H1 (cell line): ENCODE measurements at regions of chr7 and their contacts with region 1.

Region 1: DNA sequence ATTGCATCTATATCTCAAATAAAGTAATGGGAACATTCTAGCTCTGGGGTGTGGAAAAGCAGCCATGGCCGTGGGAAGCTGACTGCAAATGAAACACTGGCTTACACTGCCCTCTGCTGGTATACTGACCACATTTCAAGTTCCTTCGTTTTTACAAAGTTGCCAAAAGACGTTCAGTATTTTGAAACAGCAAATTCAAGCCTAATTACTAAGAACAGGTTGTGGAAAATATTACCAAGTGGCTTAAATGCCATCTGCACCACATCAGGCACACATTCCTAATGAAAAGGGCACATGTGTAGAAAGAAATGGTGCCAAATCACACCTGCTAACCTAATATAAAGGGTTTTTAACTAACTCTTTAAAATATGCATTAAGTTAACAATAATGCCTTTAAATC is 83.9 kb downstream of the JAZF1 start:
- DNase-seq: no peak
- H3K4me3 ChIP-seq: no peak overlapping the region
- H3K27ac ChIP-seq: no peak overlapping the region
- H3K4me1 ChIP-seq: peaks cover 0 to 3% (median 2%) of the 10 kb centered on the region in 4 experiments; a peak in 4 of 7 replicates
- H3K27me3 ChIP-seq: no peaks in the 10 kb centered on the region
- CTCF ChIP-seq: peak; percentile 55 to 83 (median 71)
- EP300 ChIP-seq: no peak
- POLR2A ChIP-seq: no peak
- RAD21 ChIP-seq: peak; percentile 71 to 82

Region 2: GRCh38 chr7:28020302-28020940 is 76.3 kb before region 1 on chr7:
- CTCF ChIA-PET with region 1: interaction called, 22 read pairs
- POLR2A ChIA-PET with region 1: no interaction called
- DNase-seq: peak; percentile 43 to 68
- H3K4me3 ChIP-seq: no peak overlapping the region
- H3K27ac ChIP-seq: no peak overlapping the region
- H3K4me1 ChIP-seq: peaks cover 0 to 3% (median 2%) of the 10 kb centered on the region in 4 experiments; a peak in 4 of 7 replicates
- H3K27me3 ChIP-seq: no peaks in the 10 kb centered on the region
- CTCF ChIP-seq: peak; percentile 55 to 98 (median 93)
- EP300 ChIP-seq: no peak
- POLR2A ChIP-seq: no peak
- RAD21 ChIP-seq: peak; percentile 98 to 99

Region 3: GRCh38 chr7:28044825-28045224 is 51.9 kb before region 1 on chr7:
- CTCF ChIA-PET with region 1: interaction called, 35 read pairs
- POLR2A ChIA-PET with region 1: no interaction called
- DNase-seq: no peak
- H3K4me3 ChIP-seq: no peak overlapping the region
- H3K27ac ChIP-seq: no peak overlapping the region
- H3K4me1 ChIP-seq: peaks cover 0 to 5% (median 0%) of the 10 kb centered on the region in 4 experiments; a peak in 2 of 7 replicates
- H3K27me3 ChIP-seq: no peaks in the 10 kb centered on the region
- CTCF ChIP-seq: peak in 2 of 3 experiments; percentile 20 to 32; a peak in 2 of 4 replicates
- EP300 ChIP-seq: no peak
- POLR2A ChIP-seq: no peak
- RAD21 ChIP-seq: peak; percentile 39 to 51; a peak in 3 of 4 replicates

Region 4: GRCh38 chr7:28069807-28070206 is 26.9 kb before region 1 on chr7:
- CTCF ChIA-PET with region 1: interaction called, 25 read pairs
- POLR2A ChIA-PET with region 1: no interaction called
- DNase-seq: no peak
- H3K4me3 ChIP-seq: no peak overlapping the region
- H3K27ac ChIP-seq: no peak overlapping the region
- H3K4me1 ChIP-seq: peaks cover 0 to 3% (median 0%) of the 10 kb centered on the region in 4 experiments; a peak in 3 of 7 replicates
- H3K27me3 ChIP-seq: no peaks in the 10 kb centered on the region
- CTCF ChIP-seq: no peak
- EP300 ChIP-seq: no peak
- POLR2A ChIP-seq: no peak
- RAD21 ChIP-seq: no peak

Region 5: DNA sequence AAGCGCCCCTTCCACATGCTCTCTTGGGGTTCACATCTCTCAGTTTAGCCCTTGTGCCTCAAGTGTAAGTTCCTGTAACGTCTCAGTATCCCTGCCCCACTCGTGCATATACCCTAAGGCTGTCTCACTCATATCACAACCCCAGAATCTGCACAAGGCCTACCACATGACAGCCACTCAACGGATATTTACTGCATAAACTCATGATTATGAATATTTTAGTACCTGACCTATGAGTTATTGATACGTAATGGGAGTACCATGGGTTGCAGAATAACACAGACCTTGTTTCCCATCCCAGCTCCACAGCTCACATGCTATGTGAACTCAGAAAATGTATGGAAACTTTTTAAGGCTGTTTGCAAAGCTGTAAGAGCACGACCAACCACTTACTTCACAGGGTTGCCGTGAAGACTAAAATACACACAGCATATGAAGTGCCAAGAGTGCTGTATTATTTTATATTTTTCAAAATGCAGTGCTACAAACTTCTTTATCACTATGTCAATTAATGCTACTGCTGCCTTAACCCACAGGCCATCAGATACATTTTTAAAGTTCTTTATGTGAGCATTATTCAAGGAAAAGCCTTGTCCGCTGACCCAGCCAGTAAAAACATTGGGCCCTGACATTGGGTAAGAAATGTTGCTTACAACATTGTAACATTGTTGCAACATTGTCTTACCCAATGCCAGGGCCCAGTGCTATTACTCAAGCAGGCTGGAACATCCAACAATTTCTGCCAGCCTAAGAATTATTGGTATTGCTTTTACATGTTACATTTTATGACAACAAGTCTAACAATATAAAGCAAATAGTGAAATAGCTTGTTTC is 13.3 kb before region 1 on chr7:
- CTCF ChIA-PET with region 1: interaction called, 108 read pairs
- POLR2A ChIA-PET with region 1: interaction called, 3 read pairs
- DNase-seq: no peak
- H3K4me3 ChIP-seq: no peak overlapping the region
- H3K27ac ChIP-seq: no peak overlapping the region
- H3K4me1 ChIP-seq: peaks cover 0 to 6% (median 0%) of the 10 kb centered on the region in 4 experiments; a peak in 2 of 7 replicates
- H3K27me3 ChIP-seq: no peaks in the 10 kb centered on the region
- CTCF ChIP-seq: no peak
- EP300 ChIP-seq: no peak
- POLR2A ChIP-seq: no peak
- RAD21 ChIP-seq: no peak

Region 6: DNA sequence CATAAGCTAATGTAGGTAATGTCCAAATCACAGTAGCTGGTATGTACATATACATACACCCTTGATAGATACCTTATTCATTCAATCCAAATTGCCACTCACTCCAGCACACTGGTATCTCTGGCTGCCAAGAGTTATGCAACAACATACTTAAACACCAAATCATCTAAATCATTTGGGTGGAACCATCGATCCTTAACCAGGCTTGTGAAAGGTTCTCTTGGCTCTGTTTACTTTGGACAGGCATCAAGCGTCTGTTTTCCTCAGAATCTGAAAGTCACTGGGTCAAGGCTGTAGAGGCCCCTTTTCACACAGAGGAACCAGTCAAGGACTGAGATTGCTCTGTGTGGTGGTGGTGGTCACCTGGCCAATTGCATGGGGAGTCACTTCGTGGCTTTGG is 59.3 kb after region 1 on chr7:
- CTCF ChIA-PET with region 1: no interaction called
- POLR2A ChIA-PET with region 1: no interaction called
- DNase-seq: no peak
- H3K4me3 ChIP-seq: no peak overlapping the region
- H3K27ac ChIP-seq: no peak overlapping the region
- H3K4me1 ChIP-seq: peaks cover 0 to 5% (median under 1%) of the 10 kb centered on the region in 4 experiments; a peak in 1 of 7 replicates
- H3K27me3 ChIP-seq: no peaks in the 10 kb centered on the region
- CTCF ChIP-seq: no peak
- EP300 ChIP-seq: no peak
- POLR2A ChIP-seq: no peak
- RAD21 ChIP-seq: no peak